Activated CD4-positive, alpha-beta T cell treated with anti-CD3 and anti-CD28 coated beads, Interleukin-2, amount 10 ng/mL, durations not matched to agents 24 days and 14 days (primary cell): ENCODE measurements at regions of chr4 and their contacts with region 1.

Region 1: GRCh38 chr4:109815151-109816081 is at the start of gene GAR1:
- DNase-seq: peak; percentile 97
- H3K4me3 Mint-ChIP-seq: peak within 1 kb of the TSS; percentile 95
- H3K27ac Mint-ChIP-seq: peak within 1 kb of the TSS; percentile 98
- H3K4me1 Mint-ChIP-seq: peaks cover 37% of the 10 kb centered on the region
- H3K27me3 Mint-ChIP-seq: no peaks in the 10 kb centered on the region
- total RNA-seq, gene GAR1: 59.1 and 61.8 TPM in 2 replicates

Region 2: GRCh38 chr4:108620101-108620932 is 1195.1 kb before region 1 on chr4 and contains the start of gene RPL34:
- intact Hi-C with region 1: loop called (anchors 10 kb)
- DNase-seq: peak; percentile 99
- H3K4me3 Mint-ChIP-seq: peak within 1 kb of the TSS; percentile 93
- H3K27ac Mint-ChIP-seq: peak within 1 kb of the TSS; percentile 96
- H3K4me1 Mint-ChIP-seq: peaks cover 40% of the 10 kb centered on the region
- H3K27me3 Mint-ChIP-seq: no peaks in the 10 kb centered on the region
- total RNA-seq, gene RPL34: 1,411 and 1,425 TPM in 2 replicates

Region 3: GRCh38 chr4:109424093-109424841 is 391.1 kb before region 1 on chr4:
- intact Hi-C with region 1: loop called (anchors 1 kb)
- DNase-seq: no peak
- H3K4me3 Mint-ChIP-seq: no peak overlapping the region
- H3K27ac Mint-ChIP-seq: no peak overlapping the region
- H3K4me1 Mint-ChIP-seq: peaks cover 6% of the 10 kb centered on the region
- H3K27me3 Mint-ChIP-seq: peaks cover 9% of the 10 kb centered on the region

Region 4: GRCh38 chr4:109559983-109560686 is 255.3 kb before region 1 on chr4 and contains the start of gene MCUB:
- intact Hi-C with region 1: loop called (anchors 1 kb)
- DNase-seq: peak; percentile 98
- H3K4me3 Mint-ChIP-seq: peak within 1 kb of the TSS; percentile 95
- H3K27ac Mint-ChIP-seq: peak within 1 kb of the TSS; percentile 98
- H3K4me1 Mint-ChIP-seq: peaks cover 42% of the 10 kb centered on the region
- H3K27me3 Mint-ChIP-seq: no peaks in the 10 kb centered on the region
- total RNA-seq, gene MCUB: 43.6 and 46.4 TPM in 2 replicates

Region 5: DNA sequence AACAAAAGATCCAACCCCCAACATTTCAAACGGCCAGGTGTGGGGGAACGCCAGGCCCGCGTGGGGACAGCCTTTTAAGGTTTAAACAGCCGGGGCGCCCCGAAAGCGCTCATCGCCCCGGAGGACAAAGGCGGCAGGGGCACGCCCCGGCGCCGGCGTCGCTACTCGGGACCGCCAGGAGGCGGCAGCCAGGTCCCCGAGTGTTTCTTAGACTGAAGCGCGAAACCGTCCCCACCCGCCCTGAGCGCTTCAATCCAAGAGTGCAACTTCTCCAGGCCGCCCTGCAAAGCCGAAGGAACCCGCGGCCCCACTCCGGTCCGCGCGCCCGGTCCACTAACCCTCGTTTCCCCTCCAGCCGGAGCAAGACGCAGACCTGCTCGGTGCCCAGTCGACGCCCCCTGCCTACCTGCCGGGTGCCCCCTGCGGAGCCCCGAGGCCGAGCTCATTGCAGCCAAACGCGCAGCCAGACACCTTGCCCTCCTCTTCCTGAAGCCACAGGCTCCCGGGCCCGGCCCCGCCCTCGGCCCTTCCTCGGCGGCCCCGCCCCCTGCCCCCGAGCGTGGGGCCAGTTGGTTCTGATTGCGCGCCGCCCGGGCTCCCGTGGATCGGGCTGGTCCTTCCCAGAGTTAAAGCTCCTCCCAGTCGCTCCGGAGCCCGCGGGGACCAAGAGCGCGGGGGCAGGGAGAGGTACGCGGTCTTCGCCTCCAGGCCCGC is 112.3 kb before region 1 on chr4 and contains the start of gene CASP6:
- intact Hi-C with region 1: loop called (anchors 1 kb)
- DNase-seq: peak; percentile 94
- H3K4me3 Mint-ChIP-seq: peak within 1 kb of the TSS; percentile 94
- H3K27ac Mint-ChIP-seq: peak within 1 kb of the TSS; percentile 90
- H3K4me1 Mint-ChIP-seq: peaks cover 29% of the 10 kb centered on the region
- H3K27me3 Mint-ChIP-seq: no peaks in the 10 kb centered on the region
- total RNA-seq, gene CASP6: 19.3 and 23.6 TPM in 2 replicates

Region 6: DNA sequence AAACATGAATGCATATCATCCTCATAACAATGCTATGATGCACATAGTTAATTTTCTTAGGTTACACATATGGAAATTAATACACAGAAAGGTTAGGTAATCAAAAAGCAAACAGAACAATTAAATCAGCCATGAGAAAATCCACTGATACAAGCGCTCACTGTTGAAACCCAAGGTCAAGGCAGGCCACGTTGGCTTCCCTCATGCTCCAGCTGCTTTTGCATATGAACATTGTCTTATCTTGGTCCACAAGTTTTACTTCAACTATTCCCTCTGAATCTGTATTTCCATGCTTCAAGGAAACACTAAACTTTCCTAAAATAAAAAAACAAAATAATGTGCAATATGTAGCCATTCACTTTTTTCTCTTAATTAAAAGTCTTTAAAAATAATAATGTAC is 51.0 kb before region 1 on chr4:
- intact Hi-C with region 1: loop called (anchors 5 kb)
- DNase-seq: no peak
- H3K4me3 Mint-ChIP-seq: no peak overlapping the region
- H3K27ac Mint-ChIP-seq: no peak overlapping the region
- H3K4me1 Mint-ChIP-seq: peaks cover 5% of the 10 kb centered on the region
- H3K27me3 Mint-ChIP-seq: peaks cover 6% of the 10 kb centered on the region

Region 7: GRCh38 chr4:110296892-110297291 is 481.5 kb after region 1 on chr4:
- intact Hi-C with region 1: loop called (anchors 10 kb)
- DNase-seq: no peak
- H3K4me3 Mint-ChIP-seq: no peak overlapping the region
- H3K27ac Mint-ChIP-seq: no peak overlapping the region
- H3K4me1 Mint-ChIP-seq: peaks cover 9% of the 10 kb centered on the region
- H3K27me3 Mint-ChIP-seq: peaks cover 45% of the 10 kb centered on the region